Breast epithelium (tissue), 4 donors: ENCODE measurements at regions of chr2 and their contacts with region 1.

Region 1: DNA sequence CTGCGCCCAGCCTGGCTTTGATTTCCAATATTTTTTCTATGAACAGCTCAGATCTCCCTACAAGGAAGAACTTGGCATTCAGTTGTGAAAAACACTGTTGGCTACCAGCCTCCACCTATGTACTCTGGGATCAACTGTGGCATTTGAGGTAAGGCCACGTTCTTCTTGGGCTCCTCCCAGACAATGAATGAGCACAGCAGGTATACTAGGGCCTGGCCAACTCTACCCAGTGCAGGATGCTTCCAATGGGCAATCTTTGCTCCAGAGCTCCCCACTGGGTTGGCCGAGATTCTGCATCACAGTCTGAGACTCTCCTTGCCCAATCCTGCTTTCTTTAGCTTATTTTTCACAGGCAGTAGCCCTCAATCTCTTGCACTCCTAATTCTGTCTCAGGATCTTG is 75.9 kb downstream of the TMEM131 start:
- DNase-seq: no peak
- H3K4me3 ChIP-seq: no peak overlapping the region
- H3K27ac ChIP-seq: no peak overlapping the region
- H3K4me1 ChIP-seq: no peaks in the 10 kb centered on the region
- H3K27me3 ChIP-seq: no peaks in the 10 kb centered on the region
- CTCF ChIP-seq: no peak
- POLR2A ChIP-seq: no peak

Region 2: GRCh38 chr2:97950329-97951154 is 30.7 kb after region 1 on chr2:
- intact Hi-C with region 1: no loop called
- DNase-seq: no peak
- H3K4me3 ChIP-seq: no peak overlapping the region
- H3K27ac ChIP-seq: no peak overlapping the region
- H3K4me1 ChIP-seq: peaks cover 0 to 5% of the 10 kb centered on the region in 2 donors
- H3K27me3 ChIP-seq: no peaks in the 10 kb centered on the region
- CTCF ChIP-seq: no peak
- POLR2A ChIP-seq: no peak

Region 3: GRCh38 chr2:99789849-99790248 is 1870.0 kb after region 1 on chr2:
- intact Hi-C with region 1: loop called (anchors 10 kb)
- DNase-seq: no peak
- H3K4me3 ChIP-seq: no peak overlapping the region
- H3K27ac ChIP-seq: no peak overlapping the region
- H3K4me1 ChIP-seq: no peaks in the 10 kb centered on the region
- H3K27me3 ChIP-seq: no peaks in the 10 kb centered on the region
- CTCF ChIP-seq: no peak
- POLR2A ChIP-seq: no peak